ENCODE measurements at regions of chr3 and their contacts with region 1.

Region 1: GRCh38 chr3:158845765-158846350 is 44.0 kb downstream of the MFSD1 start:
- DNase-seq: no peak
- H3K4me3 ChIP-seq: no peak overlapping the region
- H3K27ac ChIP-seq: no peak overlapping the region
- H3K4me1 ChIP-seq: no peaks in the 10 kb centered on the region
- H3K27me3 ChIP-seq: no peaks in the 10 kb centered on the region
- CTCF ChIP-seq: peak; percentile 44 to 70 (median 60)
- EP300 ChIP-seq: no peak
- POLR2A ChIP-seq: no peak

Region 2: GRCh38 chr3:158801696-158802408 is 44.0 kb before region 1 on chr3 and contains the start of gene MFSD1:
- intact Hi-C with region 1: no loop called
- DNase-seq: peak; percentile 98
- H3K4me3 ChIP-seq: peak within 1 kb of the TSS; percentile 78 to 96 (median 90)
- H3K27ac ChIP-seq: peak within 1 kb of the TSS; percentile 79 to 89 (median 84)
- H3K4me1 ChIP-seq: peaks cover 0 to 28% (median 23%) of the 10 kb centered on the region in 4 donors
- H3K27me3 ChIP-seq: no peaks in the 10 kb centered on the region
- CTCF ChIP-seq: no peak
- EP300 ChIP-seq: peak in 2 of 4 donors; percentile 28 to 58
- POLR2A ChIP-seq: peak; percentile 79 to 86
- total RNA-seq, gene MFSD1: 53.9 to 58.5 (median 56.4) TPM

Region 3: DNA sequence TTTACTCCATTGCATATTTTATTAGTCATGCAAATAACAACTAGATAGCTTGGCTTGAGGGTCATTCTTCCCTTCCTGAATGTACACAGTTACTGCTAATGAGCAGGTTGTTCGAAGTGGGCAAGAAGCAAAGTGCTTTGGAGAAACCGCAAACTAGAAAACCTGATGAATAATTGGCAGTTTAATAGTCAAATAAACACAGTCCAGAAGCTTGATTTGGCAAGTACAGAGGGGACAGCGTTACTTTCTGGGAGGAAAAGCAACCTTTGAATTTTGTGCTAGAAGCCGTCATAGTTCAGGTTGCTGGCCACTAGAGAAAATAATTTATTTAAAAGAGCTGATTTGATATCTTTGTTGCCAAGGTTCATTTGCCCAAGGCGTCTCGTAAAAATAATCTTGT is 50.9 kb after region 1 on chr3:
- intact Hi-C with region 1: no loop called
- DNase-seq: no peak
- H3K4me3 ChIP-seq: no peak overlapping the region
- H3K27ac ChIP-seq: no peak overlapping the region
- H3K4me1 ChIP-seq: no peaks in the 10 kb centered on the region
- H3K27me3 ChIP-seq: no peaks in the 10 kb centered on the region
- CTCF ChIP-seq: no peak
- EP300 ChIP-seq: no peak
- POLR2A ChIP-seq: no peak

Region 4: GRCh38 chr3:159260049-159260662 is 414.3 kb after region 1 on chr3:
- intact Hi-C with region 1: loop called (anchors 1 kb)
- DNase-seq: no peak
- H3K4me3 ChIP-seq: no peak overlapping the region
- H3K27ac ChIP-seq: no peak overlapping the region
- H3K4me1 ChIP-seq: no peaks in the 10 kb centered on the region
- H3K27me3 ChIP-seq: no peaks in the 10 kb centered on the region
- CTCF ChIP-seq: peak; percentile 11 to 68 (median 54)
- EP300 ChIP-seq: no peak
- POLR2A ChIP-seq: no peak

Measured in sigmoid colon (tissue), 7 donors.